CD4-positive, alpha-beta memory T cell (primary cell): ENCODE measurements at regions of chr11 and their contacts with region 1.

Region 1: DNA sequence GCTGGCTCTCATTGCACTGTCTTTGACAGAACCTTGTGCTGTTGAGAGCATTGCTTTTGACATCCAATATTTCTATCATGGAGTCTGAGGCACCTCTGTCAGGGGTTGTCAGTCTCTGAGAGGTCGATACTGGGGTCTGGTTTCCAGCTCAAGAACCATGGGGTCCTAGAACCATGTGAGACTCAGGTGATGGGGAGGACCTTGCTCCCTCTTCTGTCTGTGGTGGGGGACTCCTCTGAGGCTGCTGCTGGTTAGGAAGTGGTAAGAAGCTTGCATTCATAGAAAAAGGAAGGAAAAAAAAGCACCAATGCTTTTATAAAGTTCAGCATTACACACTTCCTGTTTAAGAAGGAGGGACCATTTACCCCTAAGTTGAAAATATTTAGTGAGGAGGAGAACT is 91.8 kb upstream of the CD44 start:
- DNase-seq: peak; percentile 73 to 81 (median 77)
- H3K4me3 ChIP-seq: peak overlapping the region in 1 of 2 donors; percentile 17
- H3K4me3 Mint-ChIP-seq: peak overlapping the region in 7 of 8 donors; percentile 47 to 84 (median 65)
- H3K27ac ChIP-seq: peak overlapping the region; percentile 91
- H3K27ac Mint-ChIP-seq: peak overlapping the region; percentile 96 to 100 (median 100)
- H3K4me1 ChIP-seq: peaks cover 87% of the 10 kb centered on the region
- H3K4me1 Mint-ChIP-seq: peaks cover 63 to 93% (median 79%) of the 10 kb centered on the region in 4 donors
- H3K27me3 ChIP-seq: no peaks in the 10 kb centered on the region
- H3K27me3 Mint-ChIP-seq: no peaks in the 10 kb centered on the region

Region 2: DNA sequence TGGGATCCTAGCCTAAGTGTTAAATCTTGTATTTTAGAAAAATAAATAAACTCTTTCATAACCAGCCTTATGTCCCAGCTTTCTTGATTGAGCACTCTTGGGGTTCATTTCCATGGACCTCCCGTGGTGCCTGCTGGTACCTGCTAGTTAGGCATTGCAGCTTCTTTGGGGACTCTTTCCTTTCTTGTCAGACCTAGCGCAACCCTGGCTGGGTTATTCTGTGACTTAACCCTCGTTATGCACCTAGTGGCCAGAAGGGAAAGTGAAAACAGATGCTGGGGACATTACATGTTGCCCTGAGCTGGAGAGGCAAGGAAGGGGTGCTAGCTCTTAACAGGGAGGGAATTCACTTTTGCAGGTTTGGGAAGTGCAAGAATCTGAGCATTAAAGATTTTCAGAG is 177.8 kb before region 1 on chr11:
- CTCF ChIA-PET with region 1: no interaction called
- POLR2A ChIA-PET with region 1: no interaction called
- intact Hi-C with region 1: no loop called
- DNase-seq: no peak
- H3K4me3 ChIP-seq: no peak overlapping the region
- H3K4me3 Mint-ChIP-seq: no peak overlapping the region
- H3K27ac ChIP-seq: no peak overlapping the region
- H3K27ac Mint-ChIP-seq: peak overlapping the region in 1 of 7 donors; percentile 14
- H3K4me1 ChIP-seq: no peaks in the 10 kb centered on the region
- H3K4me1 Mint-ChIP-seq: no peaks in the 10 kb centered on the region
- H3K27me3 ChIP-seq: no peaks in the 10 kb centered on the region
- H3K27me3 Mint-ChIP-seq: no peaks in the 10 kb centered on the region

Region 3: GRCh38 chr11:35030716-35031213 is 16.4 kb before region 1 on chr11:
- CTCF ChIA-PET with region 1: interaction called, 4 read pairs
- POLR2A ChIA-PET with region 1: interaction called, 68 read pairs
- intact Hi-C with region 1: no loop called
- DNase-seq: peak in 1 of 5 donors; percentile 75
- H3K4me3 ChIP-seq: no peak overlapping the region
- H3K4me3 Mint-ChIP-seq: peak overlapping the region; percentile 3 to 89 (median 78)
- H3K27ac ChIP-seq: peak overlapping the region; percentile 46
- H3K27ac Mint-ChIP-seq: peak overlapping the region; percentile 92 to 98 (median 95)
- H3K4me1 ChIP-seq: peaks cover 44% of the 10 kb centered on the region
- H3K4me1 Mint-ChIP-seq: peaks cover 36 to 62% (median 46%) of the 10 kb centered on the region in 4 donors
- H3K27me3 ChIP-seq: no peaks in the 10 kb centered on the region
- H3K27me3 Mint-ChIP-seq: no peaks in the 10 kb centered on the region

Region 4: GRCh38 chr11:35058669-35059434 is 11.7 kb after region 1 on chr11:
- CTCF ChIA-PET with region 1: interaction called, 8 read pairs
- POLR2A ChIA-PET with region 1: interaction called, 76 read pairs
- intact Hi-C with region 1: loop called (anchors 1 kb)
- DNase-seq: no peak
- H3K4me3 ChIP-seq: no peak overlapping the region
- H3K4me3 Mint-ChIP-seq: peak overlapping the region in 7 of 8 donors; percentile 1 to 71 (median 14)
- H3K27ac ChIP-seq: no peak overlapping the region
- H3K27ac Mint-ChIP-seq: peak overlapping the region; percentile 19 to 90 (median 78)
- H3K4me1 ChIP-seq: peaks cover 40% of the 10 kb centered on the region
- H3K4me1 Mint-ChIP-seq: peaks cover 29 to 46% (median 40%) of the 10 kb centered on the region in 4 donors
- H3K27me3 ChIP-seq: no peaks in the 10 kb centered on the region
- H3K27me3 Mint-ChIP-seq: no peaks in the 10 kb centered on the region

Region 5: GRCh38 chr11:35066783-35067423 is 19.7 kb after region 1 on chr11:
- CTCF ChIA-PET with region 1: interaction called, 9 read pairs
- POLR2A ChIA-PET with region 1: interaction called, 76 read pairs
- intact Hi-C with region 1: loop called (anchors 1 kb)
- DNase-seq: peak; percentile 34 to 53 (median 42)
- H3K4me3 ChIP-seq: no peak overlapping the region
- H3K4me3 Mint-ChIP-seq: peak overlapping the region; percentile 15 to 78 (median 67)
- H3K27ac ChIP-seq: peak overlapping the region; percentile 4
- H3K27ac Mint-ChIP-seq: peak overlapping the region; percentile 63 to 92 (median 89)
- H3K4me1 ChIP-seq: peaks cover 43% of the 10 kb centered on the region
- H3K4me1 Mint-ChIP-seq: peaks cover 4 to 32% (median 27%) of the 10 kb centered on the region in 4 donors
- H3K27me3 ChIP-seq: no peaks in the 10 kb centered on the region
- H3K27me3 Mint-ChIP-seq: no peaks in the 10 kb centered on the region

Region 6: GRCh38 chr11:35144136-35144741 is 97.1 kb after region 1 on chr11:
- CTCF ChIA-PET with region 1: interaction called, 19 read pairs
- POLR2A ChIA-PET with region 1: interaction called, 211 read pairs
- intact Hi-C with region 1: loop called (anchors 1 kb)
- DNase-seq: peak; percentile 67 to 90 (median 76)
- H3K4me3 ChIP-seq: peak overlapping the region; percentile 55 to 59
- H3K4me3 Mint-ChIP-seq: peak overlapping the region; percentile 83 to 99 (median 98)
- H3K27ac ChIP-seq: peak overlapping the region; percentile 73
- H3K27ac Mint-ChIP-seq: peak overlapping the region; percentile 93 to 100 (median 95)
- H3K4me1 ChIP-seq: peaks cover 72% of the 10 kb centered on the region
- H3K4me1 Mint-ChIP-seq: peaks cover 60 to 88% (median 70%) of the 10 kb centered on the region in 4 donors
- H3K27me3 ChIP-seq: no peaks in the 10 kb centered on the region
- H3K27me3 Mint-ChIP-seq: no peaks in the 10 kb centered on the region

Region 7: GRCh38 chr11:35173011-35173511 is 125.9 kb after region 1 on chr11:
- CTCF ChIA-PET with region 1: interaction called, 3 read pairs
- POLR2A ChIA-PET with region 1: interaction called, 87 read pairs
- intact Hi-C with region 1: no loop called
- DNase-seq: peak in 1 of 5 donors; percentile 17
- H3K4me3 ChIP-seq: peak overlapping the region in 1 of 2 donors; percentile 3
- H3K4me3 Mint-ChIP-seq: peak overlapping the region in 7 of 8 donors; percentile 63 to 80 (median 71)
- H3K27ac ChIP-seq: peak overlapping the region; percentile 65
- H3K27ac Mint-ChIP-seq: peak overlapping the region; percentile 82 to 100 (median 93)
- H3K4me1 ChIP-seq: peaks cover 96% of the 10 kb centered on the region
- H3K4me1 Mint-ChIP-seq: peaks cover 86 to 95% (median 91%) of the 10 kb centered on the region in 4 donors
- H3K27me3 ChIP-seq: no peaks in the 10 kb centered on the region
- H3K27me3 Mint-ChIP-seq: no peaks in the 10 kb centered on the region